GM10248 (cell line): ENCODE measurements at regions of chr12 and their contacts with region 1.

Region 1: DNA sequence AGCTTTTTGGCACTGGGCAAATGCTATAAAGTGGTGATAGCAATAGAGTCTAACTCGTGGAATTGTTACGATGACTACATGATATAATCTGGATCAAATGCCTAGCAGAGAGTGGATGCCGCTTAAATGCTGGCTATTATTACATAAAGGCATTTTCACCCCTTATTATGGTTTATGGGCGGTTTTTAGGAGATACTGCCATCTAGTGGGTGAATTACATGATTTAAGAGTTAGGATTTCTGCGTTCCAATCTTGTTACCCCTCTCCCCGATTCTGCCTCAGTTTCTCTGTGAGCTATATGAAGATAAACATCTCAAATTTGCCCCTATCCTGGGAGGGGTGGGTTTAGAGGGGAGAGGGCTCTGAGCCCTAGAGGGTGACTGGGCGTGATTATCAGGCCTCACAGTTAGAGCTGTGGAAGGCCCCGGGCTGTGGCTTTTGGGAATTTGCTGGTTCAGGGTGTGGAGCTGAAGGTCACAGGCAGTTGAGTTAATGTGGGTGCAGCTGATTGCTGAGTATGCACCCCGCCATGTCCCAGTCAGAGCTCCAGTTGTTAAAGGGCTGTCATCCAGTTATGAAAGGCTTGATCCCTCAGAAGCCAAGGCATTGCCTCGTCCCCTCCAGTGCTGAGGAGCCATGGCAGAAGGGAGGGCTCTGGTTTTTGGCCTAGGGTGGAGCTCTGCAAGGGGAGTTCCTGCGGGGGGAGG is 14.4 kb downstream of the CLSTN3 start:
- DNase-seq: peak; percentile 51
- CTCF ChIP-seq: no peak

Region 2: DNA sequence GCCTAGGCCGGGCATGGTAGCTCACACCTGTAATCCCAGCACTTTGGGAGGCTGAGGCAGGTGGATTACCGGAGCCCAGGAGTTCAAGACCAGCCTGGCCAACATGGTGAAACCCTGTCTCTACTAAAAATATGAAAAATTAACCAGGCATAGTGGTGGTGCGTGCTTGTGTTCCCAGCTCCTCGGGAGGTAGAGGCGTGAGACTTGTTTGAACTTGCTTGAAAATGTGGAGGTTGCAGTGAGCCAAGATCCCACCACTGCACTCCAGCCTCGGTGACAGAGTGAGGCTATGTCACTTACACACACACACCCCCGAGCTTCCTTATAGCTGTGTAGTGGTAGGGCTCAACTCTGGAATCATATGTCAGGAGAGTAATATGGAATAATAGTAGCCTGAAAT is 80.8 kb before region 1 on chr12:
- CTCF ChIA-PET with region 1: no interaction called
- POLR2A ChIA-PET with region 1: no interaction called
- DNase-seq: no peak
- CTCF ChIP-seq: no peak

Region 3: DNA sequence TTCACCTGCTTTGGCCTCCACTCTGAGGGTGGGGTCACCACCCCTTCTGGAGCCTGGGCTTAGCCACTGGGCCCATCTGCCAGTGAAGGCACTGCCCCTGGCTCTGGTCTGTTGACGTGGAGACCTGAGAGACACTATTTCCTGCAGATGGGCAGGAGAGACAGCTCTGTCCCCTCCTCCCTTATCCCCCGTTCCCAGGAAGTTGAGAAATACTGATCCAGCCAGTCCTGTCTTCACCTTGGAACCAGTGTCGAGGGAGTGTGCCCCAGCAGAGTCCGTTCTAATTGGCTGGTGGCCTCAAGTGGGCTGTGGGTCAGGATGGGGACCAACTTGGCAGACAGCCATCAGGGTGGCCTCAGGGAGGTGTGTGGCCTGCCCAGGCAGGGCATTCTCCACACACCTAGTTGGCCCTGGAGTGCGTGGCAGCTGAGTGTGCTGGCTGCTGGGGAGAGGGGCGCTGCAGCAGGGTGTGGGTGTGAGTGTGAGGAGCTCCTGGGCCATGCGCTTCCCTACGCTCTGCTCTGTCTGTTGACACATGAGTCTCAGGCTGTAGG is 11.0 kb after region 1 on chr12:
- CTCF ChIA-PET with region 1: interaction called, 17 read pairs
- POLR2A ChIA-PET with region 1: no interaction called
- DNase-seq: peak; percentile 8
- CTCF ChIP-seq: no peak